ENCODE measurements at regions of chr11 and their contacts with region 1.

Region 1: GRCh38 chr11:75280227-75280701 is 39.7 kb downstream of the TPBGL start:
- DNase-seq: peak; percentile 68
- H3K4me3 Mint-ChIP-seq: no peak overlapping the region
- H3K27ac Mint-ChIP-seq: no peak overlapping the region
- H3K4me1 Mint-ChIP-seq: peaks cover 37% of the 10 kb centered on the region
- H3K27me3 Mint-ChIP-seq: no peaks in the 10 kb centered on the region

Region 2: DNA sequence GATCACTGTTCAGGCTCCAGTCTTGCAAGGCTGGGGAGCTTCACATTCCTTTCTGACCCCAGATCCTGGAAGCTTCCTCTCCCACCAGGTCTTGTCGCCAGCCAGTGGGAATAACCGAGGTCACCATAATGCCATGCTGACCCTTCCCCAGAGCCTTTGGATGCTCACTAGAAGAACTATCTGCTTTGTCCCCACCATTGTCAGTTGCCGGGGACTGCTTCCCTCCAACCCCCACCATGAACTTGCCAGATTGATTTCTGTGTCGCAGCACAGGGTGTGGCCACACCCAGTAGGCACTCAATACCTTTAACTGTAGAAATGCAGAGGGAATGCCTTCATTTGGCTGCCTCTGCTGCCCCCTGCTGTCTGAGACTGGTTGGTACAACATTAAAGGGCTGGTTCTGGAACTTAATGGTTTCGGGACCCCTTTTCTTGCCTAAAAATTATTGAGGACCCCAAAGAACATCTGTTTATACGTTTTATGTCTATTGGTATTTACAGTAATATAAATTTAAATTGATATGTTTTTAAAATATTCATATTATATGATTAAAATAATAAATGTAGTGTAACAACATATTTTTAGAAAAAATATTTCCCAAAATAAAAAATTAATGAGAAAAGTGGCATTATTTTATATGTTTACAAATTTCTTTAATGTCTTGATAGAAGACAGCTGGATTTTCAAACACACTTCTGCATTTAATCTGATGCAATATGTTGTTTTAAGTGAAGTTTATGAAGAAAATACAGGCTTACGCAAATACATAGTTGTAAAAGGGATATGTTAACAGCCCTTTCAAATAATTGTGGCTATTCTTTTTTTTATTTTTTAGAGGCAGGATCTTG is 252.2 kb after region 1 on chr11:
- intact Hi-C with region 1: loop called (anchors 5 kb)
- DNase-seq: peak; percentile 74
- H3K4me3 Mint-ChIP-seq: peak overlapping the region; percentile 1
- H3K27ac Mint-ChIP-seq: no peak overlapping the region
- H3K4me1 Mint-ChIP-seq: peaks cover 35% of the 10 kb centered on the region
- H3K27me3 Mint-ChIP-seq: peaks cover 12% of the 10 kb centered on the region

Region 3: GRCh38 chr11:75867775-75868374 is 587.6 kb after region 1 on chr11:
- intact Hi-C with region 1: no loop called
- DNase-seq: peak; percentile 24
- H3K4me3 Mint-ChIP-seq: no peak overlapping the region
- H3K27ac Mint-ChIP-seq: no peak overlapping the region
- H3K4me1 Mint-ChIP-seq: peaks cover 9% of the 10 kb centered on the region
- H3K27me3 Mint-ChIP-seq: no peaks in the 10 kb centered on the region